GM23248 (cell line): ENCODE measurements at regions of chr6 and their contacts with region 1.

Region 1: GRCh38 chr6:28355743-28356665 is 6.3 kb downstream of the ZKSCAN3 start:
- DNase-seq: peak; percentile 91
- H3K4me3 ChIP-seq: peak overlapping the region; percentile 99
- H3K27ac ChIP-seq: peak overlapping the region; percentile 74
- H3K4me1 ChIP-seq: peaks cover 4% of the 10 kb centered on the region; the same call in 1 of the 2 replicates
- H3K27me3 ChIP-seq: no peaks in the 10 kb centered on the region

Region 2: DNA sequence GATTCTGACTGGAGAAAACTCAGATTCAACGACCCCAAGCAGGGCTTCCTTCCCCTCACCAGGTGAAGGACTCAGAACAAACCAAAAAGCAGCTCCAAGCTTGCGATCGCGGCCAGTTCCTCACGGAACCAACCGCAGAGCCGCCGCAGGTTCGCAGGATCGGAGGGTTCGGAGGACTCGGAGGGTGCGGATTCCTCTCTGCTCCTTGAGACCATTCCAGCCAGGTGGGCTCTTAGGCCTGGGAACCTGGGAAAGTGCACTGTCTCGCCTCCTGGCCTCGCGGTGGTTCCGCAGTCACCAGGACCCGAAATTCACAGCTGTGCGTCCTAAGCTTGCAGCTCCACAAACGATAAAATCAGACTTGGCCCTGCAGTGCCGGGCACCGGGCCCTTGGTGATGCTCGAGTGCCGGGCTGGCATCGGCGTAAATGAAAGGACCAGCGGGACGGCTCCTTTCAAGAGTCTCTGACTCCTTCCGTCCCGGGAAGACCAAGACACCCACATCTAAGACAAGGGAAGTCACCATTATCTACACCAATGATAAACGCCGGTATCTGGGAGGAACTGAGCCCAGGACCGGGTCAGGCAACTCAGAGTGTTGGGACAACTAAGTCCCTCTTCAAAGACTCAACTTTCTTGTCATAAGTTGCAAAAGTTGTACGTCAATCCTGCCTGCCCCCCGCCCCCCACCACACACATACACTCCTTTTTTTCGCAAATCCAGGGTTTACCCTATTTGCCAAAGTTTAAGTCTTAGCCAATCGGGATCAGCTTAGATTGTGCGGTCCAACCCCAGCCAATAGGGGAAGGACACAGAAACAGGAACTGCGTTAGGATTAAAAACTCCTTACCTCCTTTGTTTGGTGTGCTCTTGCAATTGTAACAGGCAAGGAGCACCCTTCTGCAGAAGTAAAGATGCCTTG is 1178.3 kb before region 1 on chr6:
- in situ Hi-C with region 1: loop called (anchors 25 kb)
- DNase-seq: peak; percentile 95
- H3K4me3 ChIP-seq: peak overlapping the region; percentile 99
- H3K27ac ChIP-seq: peak overlapping the region; percentile 74
- H3K4me1 ChIP-seq: no peaks in the 10 kb centered on the region
- H3K27me3 ChIP-seq: no peaks in the 10 kb centered on the region

Region 3: DNA sequence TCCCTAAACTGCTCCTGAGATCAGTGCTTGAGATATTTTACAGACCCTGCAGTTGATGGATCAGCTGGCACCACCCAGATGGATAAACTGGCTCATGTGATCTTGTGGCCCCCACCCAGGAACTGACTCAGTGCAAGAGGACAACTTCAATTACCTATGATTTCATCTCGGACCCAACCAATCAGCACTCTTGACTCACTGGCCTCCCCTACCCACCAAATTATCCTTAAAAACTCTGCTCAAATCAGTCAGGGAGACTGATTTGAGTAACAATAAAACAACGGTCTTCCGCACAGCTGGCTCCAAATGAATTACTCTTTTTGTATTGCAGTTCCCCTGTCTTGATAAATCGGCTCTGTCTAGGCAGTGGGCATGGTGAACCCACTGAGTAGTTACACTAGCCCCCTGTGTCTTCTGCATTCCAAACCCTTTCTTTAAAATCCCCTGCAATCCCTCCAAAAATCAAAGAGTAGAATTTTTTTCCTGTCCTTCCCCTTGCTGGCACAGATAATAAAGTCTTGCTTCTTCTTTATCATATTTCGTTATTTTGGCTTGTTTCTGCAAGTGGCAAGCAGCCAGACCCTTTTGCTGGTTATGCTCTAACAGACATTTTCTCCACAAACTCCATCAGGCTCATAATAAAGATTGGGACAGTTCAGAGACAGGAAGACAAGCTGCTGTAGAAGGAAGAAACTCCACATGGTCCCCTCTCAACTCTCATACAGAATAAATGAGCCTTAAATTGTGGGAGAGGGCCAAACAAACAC is 350.7 kb before region 1 on chr6:
- in situ Hi-C with region 1: no loop called
- DNase-seq: no peak
- H3K4me3 ChIP-seq: no peak overlapping the region
- H3K27ac ChIP-seq: no peak overlapping the region
- H3K4me1 ChIP-seq: no peaks in the 10 kb centered on the region
- H3K27me3 ChIP-seq: no peaks in the 10 kb centered on the region

Region 4: GRCh38 chr6:28281288-28282064 is 74.5 kb before region 1 on chr6 and contains the start of gene PGBD1:
- in situ Hi-C with region 1: no loop called
- DNase-seq: peak; percentile 86
- H3K4me3 ChIP-seq: peak within 1 kb of the TSS; percentile 90
- H3K27ac ChIP-seq: 0 out of 2 replicates have a peak within 1 kb of the TSS, but pooled peaks have one; percentile 18
- H3K4me1 ChIP-seq: no peaks in the 10 kb centered on the region
- H3K27me3 ChIP-seq: no peaks in the 10 kb centered on the region
- total RNA-seq, gene PGBD1: 4.9 and 6.7 TPM in 2 replicates